Right ventricle myocardium superior (tissue), 1 donor: ENCODE measurements at regions of chr2 and their contacts with region 1.

Region 1: DNA sequence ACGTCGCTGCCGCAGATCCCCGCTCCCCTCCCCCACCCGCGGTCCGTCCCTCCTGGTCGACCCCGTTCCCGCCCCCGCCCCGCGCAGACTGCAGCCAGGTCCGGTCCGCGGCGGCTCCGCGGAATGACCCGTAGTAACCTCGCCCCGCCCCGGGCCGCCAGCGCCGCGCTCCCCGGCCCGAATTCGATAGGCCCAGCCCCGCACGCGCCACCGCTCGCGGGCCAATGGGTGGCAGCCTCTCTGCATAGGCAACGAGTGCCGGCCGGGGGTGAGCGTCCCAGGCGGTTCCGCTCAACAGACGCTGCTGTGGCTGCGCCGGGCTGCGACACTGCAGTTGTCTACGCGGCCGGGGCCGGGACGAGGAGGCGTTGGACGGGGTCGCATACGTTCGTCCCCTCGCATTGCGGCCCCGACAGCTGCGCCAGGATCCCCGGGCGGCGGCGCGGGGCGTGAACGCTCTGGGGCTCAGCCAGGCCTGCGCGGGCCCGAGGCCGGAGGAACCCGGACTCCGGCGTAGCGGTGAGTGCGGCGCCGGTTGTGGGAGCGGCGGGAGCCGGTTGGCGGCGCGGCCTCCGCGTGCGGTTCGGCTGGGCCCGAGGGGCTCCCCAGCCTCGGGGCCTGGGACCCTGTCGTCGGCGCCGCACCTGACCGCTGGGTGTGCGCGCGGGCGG is at the start of gene ACSL3:
- DNase-seq: peak; percentile 99
- ATAC-seq: peak; percentile 97
- total RNA-seq, gene ACSL3: 50.8 TPM

Region 2: GRCh38 chr2:222707689-222708525 is 153.0 kb before region 1 on chr2:
- intact Hi-C with region 1: loop called (anchors 5 kb)
- DNase-seq: peak; percentile 92
- ATAC-seq: peak; percentile 82

Region 3: GRCh38 chr2:222797261-222797660 is 63.6 kb before region 1 on chr2:
- intact Hi-C with region 1: loop called (anchors 5 kb)
- DNase-seq: no peak
- ATAC-seq: no peak